Activated CD4-positive, alpha-beta memory T cell treated with anti-CD3 and anti-CD28 coated beads for 36 hours (primary cell): ENCODE measurements at regions of chr1 and their contacts with region 1.

Region 1: GRCh38 chr1:174204697-174205308 is 45.5 kb downstream of the RABGAP1L start:
- DNase-seq: peak; percentile 47
- H3K4me3 Mint-ChIP-seq: peak overlapping the region; percentile 38
- H3K27ac Mint-ChIP-seq: peak overlapping the region; percentile 76
- H3K4me1 Mint-ChIP-seq: peaks cover 59% of the 10 kb centered on the region
- H3K27me3 Mint-ChIP-seq: no peaks in the 10 kb centered on the region

Region 2: GRCh38 chr1:174022080-174022975 is 182.5 kb before region 1 on chr1 and contains the start of gene RC3H1:
- CTCF ChIA-PET with region 1: no interaction called
- POLR2A ChIA-PET with region 1: no interaction called
- intact Hi-C with region 1: loop called (anchors 5 kb)
- DNase-seq: peak; percentile 94
- H3K4me3 Mint-ChIP-seq: peak within 1 kb of the TSS; percentile 97
- H3K27ac Mint-ChIP-seq: peak within 1 kb of the TSS; percentile 93
- H3K4me1 Mint-ChIP-seq: peaks cover 38% of the 10 kb centered on the region
- H3K27me3 Mint-ChIP-seq: no peaks in the 10 kb centered on the region
- total RNA-seq, gene RC3H1: 26.6 to 26.8 TPM

Region 3: GRCh38 chr1:174159252-174160108 is 45.3 kb before region 1 on chr1 and contains the start of gene RABGAP1L:
- CTCF ChIA-PET with region 1: no interaction called
- POLR2A ChIA-PET with region 1: interaction called, 26 read pairs
- intact Hi-C with region 1: loop called (anchors 1 kb)
- DNase-seq: peak; percentile 95
- H3K4me3 Mint-ChIP-seq: peak within 1 kb of the TSS; percentile 99
- H3K27ac Mint-ChIP-seq: peak within 1 kb of the TSS; percentile 94
- H3K4me1 Mint-ChIP-seq: peaks cover 60% of the 10 kb centered on the region
- H3K27me3 Mint-ChIP-seq: no peaks in the 10 kb centered on the region
- total RNA-seq, gene RABGAP1L: 30.5 to 30.9 TPM

Region 4: GRCh38 chr1:174174461-174175329 is 30.1 kb before region 1 on chr1:
- CTCF ChIA-PET with region 1: no interaction called
- POLR2A ChIA-PET with region 1: interaction called, 9 read pairs
- intact Hi-C with region 1: loop called (anchors 1 kb)
- DNase-seq: peak; percentile 71
- H3K4me3 Mint-ChIP-seq: no peak overlapping the region
- H3K27ac Mint-ChIP-seq: peak overlapping the region; percentile 61
- H3K4me1 Mint-ChIP-seq: peaks cover 46% of the 10 kb centered on the region
- H3K27me3 Mint-ChIP-seq: no peaks in the 10 kb centered on the region

Region 5: DNA sequence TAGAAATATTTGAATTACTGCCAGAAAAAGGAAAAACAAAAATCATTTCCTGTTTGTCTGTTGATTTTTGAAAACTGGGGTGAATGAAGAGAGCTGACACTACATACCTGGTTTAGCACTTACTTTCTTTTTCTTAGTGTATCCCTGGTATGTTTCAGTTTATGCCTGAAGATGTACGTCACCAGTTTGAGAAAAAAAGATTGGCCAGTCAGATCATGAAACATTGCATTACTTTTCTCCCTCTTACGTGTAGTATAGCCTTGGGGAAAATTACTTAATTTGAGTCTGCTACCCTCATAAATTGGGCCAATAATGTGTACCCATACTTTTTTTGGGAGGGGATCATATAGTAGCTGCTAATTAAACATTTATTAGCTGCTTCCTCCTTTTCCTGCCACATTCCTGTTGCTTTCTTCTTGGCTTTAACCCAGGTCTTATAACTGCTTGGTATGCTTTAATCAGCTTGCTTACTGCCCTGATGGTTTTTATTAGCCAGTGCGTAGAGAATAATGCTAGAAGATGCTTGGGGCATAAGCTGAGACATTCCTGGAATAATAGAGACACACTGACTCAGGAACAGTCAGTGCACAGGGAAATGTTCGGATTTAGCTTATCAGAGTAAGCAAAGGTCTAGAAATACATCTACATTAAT is 13.4 kb before region 1 on chr1:
- CTCF ChIA-PET with region 1: no interaction called
- POLR2A ChIA-PET with region 1: interaction called, 3 read pairs
- intact Hi-C with region 1: loop called (anchors 2 kb)
- DNase-seq: no peak
- H3K4me3 Mint-ChIP-seq: no peak overlapping the region
- H3K27ac Mint-ChIP-seq: no peak overlapping the region
- H3K4me1 Mint-ChIP-seq: peaks cover 35% of the 10 kb centered on the region
- H3K27me3 Mint-ChIP-seq: no peaks in the 10 kb centered on the region

Region 6: DNA sequence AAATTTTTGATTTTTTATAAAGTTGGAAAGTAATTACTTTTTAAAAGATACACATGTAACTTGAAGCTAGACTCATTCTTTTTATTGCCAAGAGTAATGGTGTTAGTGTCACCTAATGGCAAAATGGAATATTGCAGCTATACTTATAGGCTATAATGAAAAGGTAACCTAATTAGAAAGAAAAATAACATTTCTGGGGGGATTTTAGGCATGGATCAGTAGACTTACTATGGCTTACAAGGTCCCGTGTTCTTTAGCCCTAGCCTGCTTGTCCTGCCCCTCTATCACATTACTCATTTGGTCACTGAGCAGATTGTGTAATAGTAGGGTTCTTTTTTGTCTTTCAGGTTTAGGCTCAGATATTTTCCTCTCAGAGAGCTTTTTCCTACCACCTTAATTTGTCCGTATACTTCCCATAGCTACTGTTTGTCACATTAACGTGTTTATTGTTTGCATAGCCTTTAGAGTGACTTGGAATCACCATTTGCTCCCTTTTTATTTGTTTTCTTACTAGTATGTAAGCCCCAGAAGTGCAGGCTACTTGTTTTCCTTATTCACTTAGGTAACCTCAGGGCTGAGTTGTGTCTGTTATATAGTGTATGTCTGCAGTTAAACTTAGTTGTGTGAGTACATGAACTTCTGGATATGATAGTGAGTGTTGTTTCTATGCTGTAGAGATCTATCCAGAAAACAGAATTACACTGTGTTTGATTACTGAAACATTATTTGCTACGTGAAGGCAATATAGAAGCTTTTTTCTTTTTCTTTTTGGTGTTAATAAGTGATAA is 13.2 kb after region 1 on chr1:
- CTCF ChIA-PET with region 1: interaction called, 28 read pairs
- POLR2A ChIA-PET with region 1: interaction called, 7 read pairs
- intact Hi-C with region 1: loop called (anchors 1 kb)
- DNase-seq: no peak
- H3K4me3 Mint-ChIP-seq: no peak overlapping the region
- H3K27ac Mint-ChIP-seq: no peak overlapping the region
- H3K4me1 Mint-ChIP-seq: peaks cover 11% of the 10 kb centered on the region
- H3K27me3 Mint-ChIP-seq: no peaks in the 10 kb centered on the region

Region 7: GRCh38 chr1:174358786-174359453 is 154.1 kb after region 1 on chr1:
- CTCF ChIA-PET with region 1: no interaction called
- POLR2A ChIA-PET with region 1: no interaction called
- intact Hi-C with region 1: no loop called
- DNase-seq: no peak
- H3K4me3 Mint-ChIP-seq: no peak overlapping the region
- H3K27ac Mint-ChIP-seq: no peak overlapping the region
- H3K4me1 Mint-ChIP-seq: no peaks in the 10 kb centered on the region
- H3K27me3 Mint-ChIP-seq: no peaks in the 10 kb centered on the region